ENCODE measurements at regions of chr1 and their contacts with region 1.

Region 1: GRCh38 chr1:173190101-173190906 is 16.8 kb downstream of the TNFSF4 start:
- DNase-seq: peak; percentile 99
- H3K4me3 ChIP-seq: no peak overlapping the region
- H3K27ac ChIP-seq: peak overlapping the region; percentile 98
- H3K4me1 ChIP-seq: peaks cover 58% of the 10 kb centered on the region
- H3K27me3 ChIP-seq: no peaks in the 10 kb centered on the region
- CTCF ChIP-seq: no peak
- POLR2A ChIP-seq: peak; percentile 35

Region 2: GRCh38 chr1:173112129-173112528 is 78.2 kb before region 1 on chr1:
- CTCF ChIA-PET with region 1: no interaction called
- POLR2A ChIA-PET with region 1: no interaction called
- dilution Hi-C with region 1: no loop called
- intact Hi-C with region 1: loop called (anchors 5 kb)
- DNase-seq: peak; percentile 76
- H3K4me3 ChIP-seq: no peak overlapping the region
- H3K27ac ChIP-seq: peak overlapping the region; percentile 58
- H3K4me1 ChIP-seq: peaks cover 29% of the 10 kb centered on the region
- H3K27me3 ChIP-seq: no peaks in the 10 kb centered on the region
- CTCF ChIP-seq: no peak
- POLR2A ChIP-seq: no peak

Measured in endothelial cell of umbilical vein (primary cell).